Transverse colon (tissue), 4 donors: ENCODE measurements at regions of chr7 and their contacts with region 1.

Region 1: DNA sequence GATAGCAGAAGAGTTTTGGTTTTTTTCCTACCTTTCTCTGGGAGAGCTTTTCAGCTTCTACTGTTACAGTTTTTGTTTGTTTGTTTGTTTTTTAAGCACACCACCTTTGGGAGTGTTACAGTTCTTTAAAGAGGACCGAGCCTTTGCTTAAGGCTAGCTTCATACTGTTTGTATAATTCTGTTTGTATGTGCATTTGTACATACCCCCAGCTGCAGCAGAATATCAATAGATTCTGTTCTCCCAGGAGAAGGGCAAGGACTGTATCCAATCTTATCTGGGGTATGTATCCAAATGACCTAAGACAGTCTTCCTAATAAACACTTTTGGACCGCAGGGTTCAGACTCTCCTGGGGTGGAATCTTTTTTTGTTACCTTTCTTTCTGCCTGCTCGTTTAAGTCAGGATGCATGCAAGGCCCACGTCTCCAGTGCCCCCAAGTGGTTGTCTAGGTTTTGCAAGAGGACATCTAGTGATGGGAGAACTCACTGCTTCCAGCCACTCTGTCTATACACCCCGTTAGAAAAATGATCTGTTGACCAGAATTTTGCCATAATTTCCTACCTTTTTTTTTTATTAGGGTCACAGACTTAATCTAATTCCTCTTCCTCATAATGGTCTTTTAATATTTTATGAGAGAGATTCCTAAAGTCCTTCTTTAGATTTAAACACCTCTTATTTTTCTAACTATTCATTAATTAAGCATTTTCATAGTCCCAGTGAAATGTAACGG is 23.9 kb downstream of the NRF1 start:
- DNase-seq: peak; percentile 59
- H3K4me3 ChIP-seq: no peak overlapping the region
- H3K27ac ChIP-seq: no peak overlapping the region
- H3K4me1 ChIP-seq: peaks cover 0 to under 1% (median 0%) of the 10 kb centered on the region in 4 donors
- H3K27me3 ChIP-seq: no peaks in the 10 kb centered on the region
- CTCF ChIP-seq: peak; percentile 39 to 68 (median 61)
- EP300 ChIP-seq: no peak
- POLR2A ChIP-seq: no peak

Region 2: DNA sequence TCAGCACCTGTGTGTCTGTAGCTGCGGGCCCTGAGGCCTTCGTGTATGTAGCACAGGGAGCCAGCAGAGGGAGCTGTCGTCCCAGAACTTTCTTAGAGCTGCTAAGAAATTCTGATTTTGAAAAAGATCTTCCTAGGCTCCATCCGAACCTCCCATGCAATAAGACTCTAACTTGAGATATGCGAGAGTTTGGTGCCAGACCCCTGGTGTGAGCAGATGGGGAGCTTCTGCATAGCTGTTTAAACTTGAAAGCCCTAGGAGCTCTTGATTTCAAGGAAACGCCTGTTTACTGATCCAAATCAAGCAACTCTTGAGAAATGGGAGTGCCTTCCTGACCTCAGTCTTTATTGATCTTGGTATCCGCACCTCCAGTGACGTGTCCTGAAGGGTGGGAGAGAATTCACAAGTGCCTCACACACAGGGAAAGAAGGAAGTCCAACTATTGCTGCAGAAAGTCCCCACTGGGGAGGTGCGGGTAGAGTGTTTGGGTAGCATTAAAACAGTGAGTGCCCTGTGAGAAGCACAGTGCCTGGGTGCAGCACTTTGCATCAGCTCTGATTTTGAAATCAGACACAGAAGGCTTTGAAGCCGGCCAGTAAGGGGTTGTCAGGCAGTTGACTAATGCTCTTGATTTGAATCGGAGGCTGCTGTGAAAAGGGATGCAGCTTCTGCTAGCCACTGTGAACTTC is 267.6 kb before region 1 on chr7:
- in situ Hi-C with region 1: loop called in 1 of 4 experiments (anchors 25 kb)
- intact Hi-C with region 1: no loop called
- DNase-seq: peak; percentile 88
- H3K4me3 ChIP-seq: peak overlapping the region in 3 of 4 donors; percentile 30 to 51 (median 36)
- H3K27ac ChIP-seq: peak overlapping the region; percentile 83 to 89 (median 84)
- H3K4me1 ChIP-seq: peaks cover 3 to 34% (median 19%) of the 10 kb centered on the region in 4 donors
- H3K27me3 ChIP-seq: no peaks in the 10 kb centered on the region
- CTCF ChIP-seq: peak; percentile 82 to 92 (median 86)
- EP300 ChIP-seq: no peak
- POLR2A ChIP-seq: peak; percentile 97